Activated naive CD4-positive, alpha-beta T cell treated with anti-CD3 and anti-CD28 coated beads, Interleukin-2, amount 10 ng/mL, durations not matched to agents 7 days and 5 days (primary cell): ENCODE measurements at regions of chr20 and their contacts with region 1.

Region 1: GRCh38 chr20:57596998-57597939 is 23.0 kb downstream of the ZBP1 start:
- DNase-seq: peak; percentile 80
- H3K4me3 Mint-ChIP-seq: no peak overlapping the region
- H3K27ac Mint-ChIP-seq: no peak overlapping the region
- H3K4me1 Mint-ChIP-seq: no peaks in the 10 kb centered on the region
- H3K27me3 Mint-ChIP-seq: peaks cover 81% of the 10 kb centered on the region

Region 2: DNA sequence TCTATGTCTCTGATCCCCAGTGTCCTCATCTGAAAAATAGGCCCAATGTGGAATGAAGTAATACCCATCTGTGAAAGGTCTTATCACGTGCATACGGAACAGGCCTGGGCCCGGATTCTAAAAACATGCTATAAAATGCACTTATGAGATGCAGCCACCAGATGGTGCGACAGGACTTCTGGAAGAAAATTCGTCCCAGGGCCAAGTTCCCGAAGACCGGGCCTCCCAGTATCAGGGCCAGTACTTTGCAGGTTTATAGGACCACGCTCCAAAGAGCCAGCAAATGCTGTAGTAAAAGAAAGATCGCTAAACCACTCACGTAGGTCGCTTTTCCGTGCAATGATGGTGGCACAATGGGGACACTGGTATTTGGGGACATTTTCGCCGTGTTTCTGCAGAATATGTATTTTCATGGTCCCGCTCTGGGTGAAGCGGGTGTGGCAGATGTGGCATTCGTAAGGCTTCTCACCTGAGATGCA is 83.0 kb before region 1 on chr20:
- CTCF ChIA-PET with region 1: interaction called, 22 read pairs
- DNase-seq: peak; percentile 53
- H3K4me3 Mint-ChIP-seq: no peak overlapping the region
- H3K27ac Mint-ChIP-seq: no peak overlapping the region
- H3K4me1 Mint-ChIP-seq: no peaks in the 10 kb centered on the region
- H3K27me3 Mint-ChIP-seq: peaks cover 16% of the 10 kb centered on the region

Region 3: DNA sequence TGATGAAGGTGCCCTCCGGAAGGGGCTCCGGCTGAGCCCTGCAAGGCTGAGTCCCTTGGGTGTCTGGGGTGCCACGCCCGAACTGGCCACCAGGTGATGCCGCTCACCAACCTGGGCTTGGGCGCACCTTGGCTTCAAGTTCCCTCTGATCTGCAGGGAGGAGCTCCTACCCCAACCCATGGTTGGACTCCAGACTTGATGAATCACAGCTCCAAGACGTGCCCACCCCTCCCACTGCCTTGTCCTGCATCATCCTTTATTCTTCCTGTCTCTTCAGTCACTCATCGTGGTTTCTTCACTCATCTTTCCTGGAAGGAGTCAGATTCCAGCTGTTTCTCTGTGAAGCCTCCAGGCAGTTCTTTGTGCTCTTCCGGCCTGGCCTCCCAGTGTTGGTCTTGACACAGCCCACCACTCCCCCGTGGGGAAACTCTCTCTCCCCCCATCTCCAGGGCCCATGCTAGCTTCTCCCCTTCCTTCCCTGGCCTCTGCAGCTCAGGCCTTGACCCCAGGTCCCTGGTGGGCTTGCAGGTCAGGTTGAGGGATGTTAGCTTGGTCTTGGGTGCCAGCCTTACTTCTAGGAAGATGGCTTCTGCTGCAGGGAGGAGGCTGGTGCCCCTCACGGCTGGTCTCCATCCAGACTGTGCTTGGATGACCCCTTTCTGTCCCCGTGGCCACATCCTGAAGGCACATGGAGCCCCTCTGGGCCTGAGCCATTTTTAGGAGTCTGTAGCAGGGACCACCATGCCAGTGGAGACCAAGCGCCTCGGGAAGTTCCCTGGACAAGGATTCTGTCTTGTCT is 25.5 kb after region 1 on chr20:
- CTCF ChIA-PET with region 1: interaction called, 34 read pairs
- DNase-seq: peak; percentile 85
- H3K4me3 Mint-ChIP-seq: peak overlapping the region; percentile 48
- H3K27ac Mint-ChIP-seq: peak overlapping the region; percentile 88
- H3K4me1 Mint-ChIP-seq: peaks cover 87% of the 10 kb centered on the region
- H3K27me3 Mint-ChIP-seq: peaks cover 29% of the 10 kb centered on the region

Region 4: DNA sequence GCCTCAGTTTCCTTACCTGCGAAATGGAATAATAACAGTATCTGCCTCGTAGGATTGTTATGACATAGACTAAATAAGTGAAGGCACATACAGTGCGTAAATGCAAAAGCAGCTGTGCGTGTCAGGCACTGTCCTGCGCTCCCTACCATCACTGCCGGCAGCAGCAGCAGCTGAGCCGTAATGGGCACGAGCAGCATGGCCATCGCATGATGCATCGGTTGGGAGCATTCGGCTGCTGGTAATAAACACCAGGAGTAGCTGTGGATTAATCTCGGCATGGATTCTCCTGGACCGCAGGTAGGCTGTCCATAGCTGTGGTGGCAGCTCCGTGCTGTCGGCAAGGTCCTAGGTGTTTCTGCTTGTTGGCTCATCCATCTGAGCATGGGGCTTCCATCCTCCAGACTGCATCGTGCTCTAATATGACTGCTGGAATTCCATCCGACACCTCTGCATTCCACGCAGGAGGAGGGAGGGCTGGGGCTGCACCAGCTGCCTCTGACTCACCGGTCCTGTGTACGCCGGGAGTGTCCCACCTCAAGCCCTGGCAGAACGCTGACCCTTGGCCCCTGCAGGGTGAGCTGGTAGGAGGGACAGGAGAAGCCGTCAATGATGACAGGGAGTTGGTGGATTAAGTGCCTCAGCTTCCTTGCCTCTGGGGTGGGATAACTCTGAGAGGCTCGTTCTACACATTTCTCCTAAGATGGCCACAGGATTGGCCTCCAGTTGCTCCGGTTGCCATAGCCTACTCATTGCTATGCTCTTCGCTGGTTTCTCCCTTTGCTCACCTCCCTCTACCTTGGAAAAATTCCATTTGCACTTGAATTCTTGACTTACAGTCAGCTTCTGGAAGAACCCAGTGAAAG is 213.5 kb after region 1 on chr20:
- CTCF ChIA-PET with region 1: no interaction called
- DNase-seq: no peak
- H3K4me3 Mint-ChIP-seq: no peak overlapping the region
- H3K27ac Mint-ChIP-seq: no peak overlapping the region
- H3K4me1 Mint-ChIP-seq: no peaks in the 10 kb centered on the region
- H3K27me3 Mint-ChIP-seq: peaks cover 16% of the 10 kb centered on the region

Region 5: GRCh38 chr20:58087193-58087858 is 490.1 kb after region 1 on chr20:
- CTCF ChIA-PET with region 1: interaction called, 19 read pairs
- DNase-seq: peak; percentile 25
- H3K4me3 Mint-ChIP-seq: no peak overlapping the region
- H3K27ac Mint-ChIP-seq: no peak overlapping the region
- H3K4me1 Mint-ChIP-seq: no peaks in the 10 kb centered on the region
- H3K27me3 Mint-ChIP-seq: peaks cover 17% of the 10 kb centered on the region